ENCODE measurements at regions of chr7 and their contacts with region 1.

Region 1: GRCh38 chr7:154913638-154914312 is 89.1 kb downstream of the PAXIP1 start:
- DNase-seq: peak; percentile 67
- H3K4me3 ChIP-seq: peak overlapping the region in 2 of 3 experiments; percentile 1 to 27
- H3K27ac ChIP-seq: no peak overlapping the region
- H3K4me1 ChIP-seq: peaks cover 4% of the 10 kb centered on the region
- H3K27me3 ChIP-seq: peaks cover 0 to 11% of the 10 kb centered on the region in 2 experiments
- CTCF ChIP-seq: peak; percentile 82 to 94
- POLR2A ChIP-seq: no peak

Region 2: GRCh38 chr7:154841731-154842331 is 71.9 kb before region 1 on chr7:
- CTCF ChIA-PET with region 1: no interaction called
- POLR2A ChIA-PET with region 1: no interaction called
- dilution Hi-C with region 1: no loop called
- intact Hi-C with region 1: no loop called
- DNase-seq: no peak
- H3K4me3 ChIP-seq: no peak overlapping the region
- H3K27ac ChIP-seq: no peak overlapping the region
- H3K4me1 ChIP-seq: no peaks in the 10 kb centered on the region
- H3K27me3 ChIP-seq: no peaks in the 10 kb centered on the region
- CTCF ChIP-seq: no peak
- POLR2A ChIP-seq: no peak

Region 3: GRCh38 chr7:154953006-154953684 is 39.4 kb after region 1 on chr7:
- CTCF ChIA-PET with region 1: interaction called, 10 read pairs
- POLR2A ChIA-PET with region 1: no interaction called
- dilution Hi-C with region 1: no loop called
- intact Hi-C with region 1: loop called (anchors 1 kb)
- DNase-seq: peak; percentile 72
- H3K4me3 ChIP-seq: no peak overlapping the region
- H3K27ac ChIP-seq: no peak overlapping the region
- H3K4me1 ChIP-seq: no peaks in the 10 kb centered on the region
- H3K27me3 ChIP-seq: no peaks in the 10 kb centered on the region
- CTCF ChIP-seq: peak; percentile 78 to 80
- POLR2A ChIP-seq: no peak

Region 4: GRCh38 chr7:155356323-155357105 is 442.7 kb after region 1 on chr7:
- CTCF ChIA-PET with region 1: interaction called, 18 read pairs
- POLR2A ChIA-PET with region 1: no interaction called
- dilution Hi-C with region 1: no loop called
- intact Hi-C with region 1: loop called (anchors 1 kb)
- DNase-seq: peak; percentile 30
- H3K4me3 ChIP-seq: no peak overlapping the region
- H3K27ac ChIP-seq: no peak overlapping the region
- H3K4me1 ChIP-seq: no peaks in the 10 kb centered on the region
- H3K27me3 ChIP-seq: peaks cover 0 to 3% of the 10 kb centered on the region in 2 experiments
- CTCF ChIP-seq: peak; percentile 43 to 44
- POLR2A ChIP-seq: no peak